Psoas muscle (tissue), 8 donors: ENCODE measurements at regions of chr18 and their contacts with region 1.

Region 1: GRCh38 chr18:48922801-48923730 is 27.7 kb downstream of the SMAD7 start:
- DNase-seq: peak; percentile 65 to 73
- ATAC-seq: peak; percentile 40 to 58 (median 48)
- H3K4me3 ChIP-seq: peak overlapping the region; percentile 55
- H3K27ac ChIP-seq: peak overlapping the region; percentile 67
- H3K4me1 ChIP-seq: peaks cover 48% of the 10 kb centered on the region
- H3K27me3 ChIP-seq: no peaks in the 10 kb centered on the region
- CTCF ChIP-seq: no peak

Region 2: DNA sequence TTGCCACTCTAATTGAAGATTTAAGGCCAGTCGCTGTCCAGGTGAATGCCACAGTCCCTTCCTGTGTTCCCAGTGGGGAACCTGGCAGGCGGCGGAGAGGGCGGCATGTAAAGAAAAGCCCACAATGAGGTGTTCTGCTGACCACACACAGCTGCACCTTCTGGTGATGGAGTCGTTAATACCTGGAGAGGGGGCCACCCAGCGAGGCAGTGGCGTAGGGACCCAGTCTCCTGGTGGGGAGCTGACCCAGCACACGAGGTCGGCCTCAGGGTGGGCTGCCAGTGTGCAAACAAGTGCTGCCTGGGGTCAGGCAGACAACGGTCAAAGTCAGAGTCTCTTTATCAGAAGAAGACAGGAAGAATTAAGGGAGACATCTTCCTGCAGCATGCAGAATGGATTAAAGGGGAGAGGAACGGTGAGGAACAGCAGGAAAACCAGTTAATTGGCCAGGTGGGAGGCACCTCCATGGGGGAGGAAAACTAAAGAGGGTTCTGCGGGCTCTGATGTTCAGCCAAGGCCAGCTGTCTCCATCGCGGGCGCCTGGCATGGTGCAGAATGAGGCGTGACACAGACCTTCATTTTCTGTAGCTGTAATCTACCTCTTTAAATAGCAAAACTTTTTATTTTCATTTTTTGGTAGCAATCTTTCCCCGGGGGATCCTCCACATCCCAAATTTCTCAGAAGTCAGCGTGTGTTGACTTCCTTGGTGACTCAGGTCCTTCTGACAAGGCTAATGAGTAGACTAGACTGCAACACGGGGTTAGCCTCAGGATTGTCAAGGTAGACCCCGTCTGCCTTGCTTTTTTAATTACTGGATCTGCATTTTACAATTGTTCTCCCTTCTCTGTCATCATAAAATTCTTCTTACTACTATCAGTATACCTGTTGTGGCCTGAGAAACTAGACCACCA is 50.6 kb before region 1 on chr18:
- intact Hi-C with region 1: loop called in 1 of 2 experiments (anchors 5 kb)
- DNase-seq: no peak
- ATAC-seq: no peak
- H3K4me3 ChIP-seq: no peak overlapping the region
- H3K27ac ChIP-seq: no peak overlapping the region
- H3K4me1 ChIP-seq: peaks cover 8% of the 10 kb centered on the region
- H3K27me3 ChIP-seq: no peaks in the 10 kb centered on the region
- CTCF ChIP-seq: no peak